Activated CD4-positive, alpha-beta memory T cell treated with anti-CD3 and anti-CD28 coated beads, Interleukin-2, amount 10 ng/mL, durations not matched to agents 7 days and 5 days (primary cell): ENCODE measurements at regions of chr2 and their contacts with region 1.

Region 1: DNA sequence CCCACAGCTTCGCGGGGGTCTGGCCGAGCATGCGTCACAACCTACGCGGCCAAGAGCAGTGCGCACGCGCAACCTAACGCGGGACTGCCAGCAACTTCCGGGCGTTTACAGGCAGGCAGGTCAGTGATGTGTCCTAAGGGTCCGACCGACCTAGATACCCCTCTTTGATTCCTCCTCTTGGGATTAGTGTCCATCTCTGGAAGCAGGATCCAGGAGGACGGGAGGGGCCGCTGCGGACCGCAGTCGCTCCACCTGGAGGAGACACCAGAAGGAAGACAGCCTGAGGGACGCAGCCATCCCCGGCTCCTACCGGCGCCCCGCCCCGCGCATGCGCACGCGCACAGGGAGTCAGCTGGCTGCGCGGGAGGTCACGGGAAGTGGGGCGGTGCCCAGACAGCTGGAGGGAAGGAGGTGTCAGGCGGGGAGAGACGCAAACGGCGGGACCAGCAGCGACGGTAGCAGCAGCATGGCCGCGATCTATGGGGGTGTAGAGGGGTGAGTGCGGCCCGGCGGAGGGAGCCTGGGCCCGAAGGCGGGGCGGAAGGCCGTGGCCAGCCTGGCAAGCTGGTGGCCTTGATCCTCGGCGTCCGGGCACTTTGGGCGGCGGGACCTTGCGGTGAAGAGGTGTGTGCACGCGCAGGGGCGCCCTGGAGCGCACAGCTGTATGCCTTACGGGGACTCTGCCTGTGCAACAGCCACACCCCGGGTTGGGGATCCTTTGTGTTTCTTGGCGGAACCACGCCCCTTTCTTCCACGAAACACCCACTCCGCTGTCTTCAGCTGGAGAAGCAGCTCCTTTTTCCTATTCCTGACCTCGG is at the start of gene NAGK:
- DNase-seq: peak; percentile 98
- H3K4me3 Mint-ChIP-seq: peak within 1 kb of the TSS; percentile 92
- H3K27ac Mint-ChIP-seq: peak within 1 kb of the TSS; percentile 88
- H3K4me1 Mint-ChIP-seq: peaks cover 58% of the 10 kb centered on the region
- H3K27me3 Mint-ChIP-seq: no peaks in the 10 kb centered on the region
- total RNA-seq, gene NAGK: 66.1 to 67.5 TPM

Region 2: DNA sequence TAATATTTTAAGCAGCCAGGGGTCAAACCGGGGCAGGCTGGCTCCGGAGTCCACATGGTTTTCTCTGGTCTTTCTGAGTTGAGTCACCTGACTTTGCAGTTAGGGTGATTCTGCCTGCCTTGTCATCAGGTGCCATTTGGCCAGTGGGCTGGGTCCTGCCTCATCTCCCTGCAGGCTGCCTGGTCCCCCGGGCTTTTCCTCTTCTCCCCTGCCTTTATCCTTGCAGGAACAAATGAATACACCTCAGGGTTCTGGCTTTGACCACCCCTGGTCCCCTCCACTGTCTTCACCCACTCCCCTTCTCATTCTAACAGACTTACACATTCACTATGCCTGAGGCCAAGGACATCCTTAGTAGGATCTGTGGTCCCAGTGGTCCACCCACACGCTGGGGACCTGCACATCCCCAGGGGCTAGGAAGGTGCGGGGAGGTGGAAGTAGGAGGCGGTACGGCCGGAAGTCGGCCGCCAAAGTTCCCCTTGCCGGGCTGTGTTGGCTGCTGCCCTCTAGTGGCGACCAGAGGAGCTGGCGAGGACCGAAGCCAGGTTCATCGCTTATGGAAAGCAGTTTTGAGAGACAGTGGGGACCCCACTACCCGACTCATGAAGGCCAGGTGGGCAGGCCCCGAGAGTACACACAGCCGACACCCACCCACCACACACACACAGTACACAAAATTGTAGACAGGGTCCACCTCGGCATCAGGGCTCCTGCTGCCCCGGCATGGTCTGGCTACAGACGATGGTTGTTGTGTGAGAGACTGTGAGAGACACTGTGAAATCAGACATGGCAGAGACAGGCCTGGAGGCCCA is 67.4 kb before region 1 on chr2:
- CTCF ChIA-PET with region 1: interaction called, 16 read pairs
- POLR2A ChIA-PET with region 1: interaction called, 26 read pairs
- DNase-seq: peak; percentile 83
- H3K4me3 Mint-ChIP-seq: peak overlapping the region; percentile 66
- H3K27ac Mint-ChIP-seq: peak overlapping the region; percentile 73
- H3K4me1 Mint-ChIP-seq: peaks cover 31% of the 10 kb centered on the region
- H3K27me3 Mint-ChIP-seq: no peaks in the 10 kb centered on the region

Region 3: GRCh38 chr2:71082402-71083252 is 14.2 kb after region 1 on chr2:
- CTCF ChIA-PET with region 1: interaction called, 7 read pairs
- POLR2A ChIA-PET with region 1: interaction called, 50 read pairs
- DNase-seq: peak; percentile 67
- H3K4me3 Mint-ChIP-seq: no peak overlapping the region
- H3K27ac Mint-ChIP-seq: no peak overlapping the region
- H3K4me1 Mint-ChIP-seq: peaks cover 15% of the 10 kb centered on the region
- H3K27me3 Mint-ChIP-seq: peaks cover 28% of the 10 kb centered on the region

Region 4: DNA sequence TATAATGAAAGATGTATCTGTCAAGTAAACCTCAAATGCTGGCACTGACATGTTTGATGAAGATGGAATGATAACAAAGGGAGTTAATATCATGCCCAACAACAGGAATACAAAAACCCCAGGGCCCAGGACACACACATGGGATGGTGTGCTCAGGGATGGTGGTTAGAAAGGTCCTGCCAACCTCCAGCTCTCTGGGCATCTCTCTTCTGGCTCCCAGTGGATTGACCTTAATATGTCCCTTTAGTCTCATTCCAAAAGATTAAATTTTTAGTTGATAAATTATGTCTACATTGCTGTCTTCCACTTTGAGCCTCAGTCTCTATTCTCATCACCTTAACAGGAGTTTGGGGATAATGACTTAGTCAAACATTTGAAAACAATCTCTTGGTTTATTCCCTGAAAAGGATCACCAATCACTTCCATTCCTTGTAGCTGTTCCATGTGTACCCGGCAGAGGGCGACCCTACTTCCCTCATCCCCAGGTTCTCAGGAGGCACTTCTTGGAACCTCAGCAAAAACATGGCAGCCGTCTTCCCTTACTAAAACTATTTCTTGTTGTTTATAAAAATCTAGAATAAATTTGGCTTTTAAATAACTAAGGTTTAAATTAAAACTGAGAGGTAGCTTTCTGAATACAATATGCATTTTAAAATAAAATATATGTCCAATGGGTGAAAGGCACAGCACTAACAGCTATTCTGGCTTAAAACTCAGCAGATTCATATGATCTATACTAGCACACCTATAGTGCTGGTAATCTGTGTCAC is 32.0 kb after region 1 on chr2:
- CTCF ChIA-PET with region 1: interaction called, 7 read pairs
- POLR2A ChIA-PET with region 1: interaction called, 16 read pairs
- DNase-seq: peak; percentile 44
- H3K4me3 Mint-ChIP-seq: no peak overlapping the region
- H3K27ac Mint-ChIP-seq: no peak overlapping the region
- H3K4me1 Mint-ChIP-seq: no peaks in the 10 kb centered on the region
- H3K27me3 Mint-ChIP-seq: peaks cover 4% of the 10 kb centered on the region

Region 5: DNA sequence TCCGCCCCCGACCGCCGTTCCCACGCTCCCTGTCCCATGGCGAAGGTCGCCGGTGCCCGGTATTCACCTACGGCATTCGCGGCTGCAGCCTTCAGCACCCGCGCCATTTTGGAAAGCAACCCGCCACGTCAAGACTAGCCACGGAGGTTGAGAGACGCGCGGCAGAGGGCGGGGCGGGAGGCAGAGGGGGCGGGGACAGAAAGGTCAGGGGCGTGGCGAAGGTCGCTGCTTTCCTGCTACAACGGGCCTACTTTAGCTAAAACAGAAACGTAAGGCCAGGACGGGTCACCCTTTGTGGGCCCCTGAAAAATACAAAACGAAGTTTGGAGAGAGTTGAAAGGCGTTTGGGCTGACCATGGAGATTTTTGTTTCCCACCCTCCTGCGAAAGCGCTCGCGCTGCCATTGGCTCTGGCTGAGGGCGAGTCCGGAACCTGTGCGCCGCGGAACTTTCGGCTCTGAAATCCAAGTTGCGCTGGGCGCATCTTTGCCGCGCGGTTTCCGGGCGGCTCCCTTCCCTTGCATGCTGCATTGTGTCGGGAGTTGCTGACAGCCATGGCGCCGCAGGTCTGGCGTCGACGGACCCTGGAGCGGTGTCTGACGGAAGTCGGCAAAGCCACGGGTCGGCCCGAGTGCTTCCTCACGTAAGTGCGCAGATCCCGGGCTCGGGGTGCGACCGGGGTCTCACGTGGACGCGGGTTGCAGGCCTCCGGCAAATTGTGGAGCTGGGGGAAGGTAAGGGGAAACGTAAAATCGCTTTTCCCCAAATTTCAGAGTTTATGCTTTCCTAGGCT is 61.9 kb after region 1 on chr2 and contains the starts of genes MCEE and MPHOSPH10:
- CTCF ChIA-PET with region 1: interaction called, 9 read pairs
- POLR2A ChIA-PET with region 1: interaction called, 75 read pairs
- DNase-seq: peak; percentile 91
- H3K4me3 Mint-ChIP-seq: no peak within 1 kb of the TSS
- H3K27ac Mint-ChIP-seq: no peak within 1 kb of the TSS
- H3K4me1 Mint-ChIP-seq: peaks cover 18% of the 10 kb centered on the region
- H3K27me3 Mint-ChIP-seq: no peaks in the 10 kb centered on the region
- total RNA-seq, gene MCEE: 18.1 to 19.1 TPM
- total RNA-seq, gene MPHOSPH10: 25.5 to 26.2 TPM

Region 6: GRCh38 chr2:71269511-71270090 is 201.2 kb after region 1 on chr2:
- CTCF ChIA-PET with region 1: no interaction called
- POLR2A ChIA-PET with region 1: no interaction called
- DNase-seq: no peak
- H3K4me3 Mint-ChIP-seq: no peak overlapping the region
- H3K27ac Mint-ChIP-seq: no peak overlapping the region
- H3K4me1 Mint-ChIP-seq: no peaks in the 10 kb centered on the region
- H3K27me3 Mint-ChIP-seq: peaks cover 43% of the 10 kb centered on the region

Region 7: DNA sequence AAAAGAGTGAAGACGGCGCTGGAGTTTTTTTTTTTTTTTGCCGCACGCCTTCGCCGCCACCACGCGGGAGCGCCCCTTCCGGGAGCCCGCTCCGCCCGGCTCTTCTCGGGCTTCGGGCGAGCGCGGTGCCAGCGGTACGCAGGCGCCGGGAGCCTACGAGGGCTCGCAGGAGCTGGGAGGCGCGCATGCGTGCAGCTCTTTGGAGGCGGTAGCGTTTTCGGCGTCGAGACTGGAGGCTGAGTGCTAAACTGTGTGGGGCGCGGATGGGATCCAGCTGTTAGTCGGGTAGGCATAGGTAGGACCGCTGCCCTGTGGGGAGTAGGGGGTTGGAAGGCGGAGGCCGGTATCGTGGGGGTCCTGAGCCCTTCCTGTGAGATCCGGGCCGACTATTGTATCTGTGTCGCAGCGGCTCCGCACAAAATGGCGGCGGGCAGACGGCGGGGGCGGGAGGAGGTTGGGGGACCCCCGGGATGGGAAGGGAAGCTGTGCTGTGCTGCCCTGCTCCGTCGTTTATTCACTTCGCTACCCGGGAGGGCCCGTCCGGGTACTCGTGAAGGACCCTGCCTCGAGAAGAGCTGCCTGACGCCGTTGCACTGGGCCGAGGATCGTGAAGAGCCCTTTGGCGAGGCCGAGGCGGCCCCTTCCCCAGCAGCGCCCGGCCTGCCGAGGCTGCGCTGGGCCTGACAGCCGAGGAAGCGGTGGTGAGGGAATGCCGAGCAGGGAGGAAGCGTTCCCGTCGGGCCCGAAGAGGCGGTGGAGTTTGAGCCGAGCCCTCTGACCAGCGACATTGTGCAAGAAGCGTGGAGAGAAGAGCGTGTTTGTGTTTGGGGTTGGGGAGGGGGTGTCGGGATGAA is 263.4 kb after region 1 on chr2 and contains the start of gene ZNF638:
- CTCF ChIA-PET with region 1: interaction called, 4 read pairs
- POLR2A ChIA-PET with region 1: interaction called, 12 read pairs
- DNase-seq: peak; percentile 92
- H3K4me3 Mint-ChIP-seq: peak within 1 kb of the TSS; percentile 100
- H3K27ac Mint-ChIP-seq: peak within 1 kb of the TSS; percentile 99
- H3K4me1 Mint-ChIP-seq: peaks cover 28% of the 10 kb centered on the region
- H3K27me3 Mint-ChIP-seq: peaks cover 3% of the 10 kb centered on the region
- total RNA-seq, gene ZNF638: 78.6 to 79.3 TPM